A549 (cell line): ENCODE measurements at regions of chr9 and their contacts with region 1.

Region 1: DNA sequence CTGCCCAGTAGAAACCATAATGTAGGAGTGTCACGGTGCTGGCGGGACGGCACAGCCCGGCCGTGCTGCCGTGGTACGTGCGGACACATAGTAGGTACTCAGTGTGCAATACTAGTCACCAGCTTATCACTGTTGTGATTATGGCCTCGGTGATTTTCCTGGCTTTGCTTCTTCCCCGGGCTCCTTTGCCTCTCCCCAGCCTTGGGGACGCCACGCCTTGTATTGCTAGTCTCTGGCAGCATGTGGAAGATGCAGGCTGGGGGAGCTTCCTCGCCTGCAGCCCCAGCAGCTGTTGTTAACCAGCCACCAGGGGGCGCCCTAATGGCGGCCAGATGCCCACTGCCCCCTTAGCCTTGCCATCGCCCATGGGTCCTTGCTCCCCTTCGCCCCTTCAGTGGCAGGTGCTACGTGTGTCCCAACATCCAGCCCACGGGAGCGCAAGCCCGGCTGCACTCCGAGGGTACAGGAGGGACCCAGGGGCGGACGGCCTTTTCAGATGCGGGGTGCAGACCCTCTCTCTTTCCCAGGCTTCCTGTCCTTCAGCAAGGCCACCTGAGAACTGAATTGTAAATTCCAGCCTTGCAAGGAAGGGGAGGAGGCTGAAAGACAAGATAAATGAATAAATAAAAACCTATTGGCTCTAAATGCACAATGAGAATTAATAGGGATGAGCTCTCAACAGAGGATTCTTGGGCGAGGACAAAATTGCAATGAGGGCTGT is 8.0 kb downstream of the NTNG2 start:
- DNase-seq: peak; percentile 58 to 66
- ATAC-seq: peak; percentile 66 to 85
- H3K4me3 ChIP-seq: no peak overlapping the region
- H3K27ac ChIP-seq: no peak overlapping the region
- H3K4me1 ChIP-seq: peaks cover 6% of the 10 kb centered on the region
- CTCF ChIP-seq: peak; percentile 84
- EP300 ChIP-seq: no peak
- POLR2A ChIP-seq: no peak
- RAD21 ChIP-seq: peak; percentile 61 to 67

Region 2: GRCh38 chr9:132154863-132155309 is 14.9 kb before region 1 on chr9:
- CTCF ChIA-PET with region 1: interaction called, 73 read pairs
- POLR2A ChIA-PET with region 1: no interaction called
- DNase-seq: no peak
- ATAC-seq: no peak
- H3K4me3 ChIP-seq: no peak overlapping the region
- H3K27ac ChIP-seq: no peak overlapping the region
- H3K4me1 ChIP-seq: no peaks in the 10 kb centered on the region
- CTCF ChIP-seq: no peak
- EP300 ChIP-seq: no peak
- POLR2A ChIP-seq: no peak
- RAD21 ChIP-seq: no peak

Region 3: DNA sequence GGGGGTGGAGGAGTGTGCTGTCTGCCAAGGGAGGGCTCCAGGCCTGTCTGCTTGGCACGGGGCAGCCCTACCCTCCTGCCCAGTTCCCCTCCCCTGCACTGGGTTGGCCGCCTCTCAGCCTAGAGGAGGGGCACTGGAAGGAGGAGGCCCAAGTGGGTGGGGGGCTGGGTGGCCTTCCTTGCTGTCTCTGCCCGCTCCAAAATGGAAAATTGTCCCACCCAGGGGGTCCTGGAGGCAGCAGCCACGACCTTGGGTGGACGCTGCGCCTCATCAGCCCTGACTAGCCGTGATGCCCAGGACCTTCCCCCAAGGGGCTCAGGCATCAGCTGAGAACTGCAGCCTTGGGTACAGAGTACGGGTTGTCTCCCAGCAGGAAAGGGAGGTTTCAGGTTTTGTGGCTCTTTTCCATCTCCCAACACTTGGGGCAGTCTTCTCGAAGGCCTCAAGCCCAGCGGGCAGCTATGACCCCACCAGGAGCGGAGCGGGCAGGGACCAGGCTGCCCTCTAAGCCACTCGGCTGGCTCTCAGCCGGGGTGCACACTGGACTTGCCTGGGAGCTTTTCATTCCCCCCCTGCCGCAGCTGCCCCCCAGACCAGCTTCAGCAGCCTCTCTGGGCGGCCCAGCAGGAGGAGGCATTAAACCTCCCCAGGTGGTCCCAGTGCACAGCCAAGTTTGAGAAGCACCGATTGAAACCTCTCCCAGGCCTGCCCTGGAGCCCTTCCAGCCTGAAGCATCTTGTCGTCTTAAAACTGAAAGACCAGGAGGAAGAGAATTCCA is 12.7 kb after region 1 on chr9:
- CTCF ChIA-PET with region 1: interaction called, 28 read pairs
- POLR2A ChIA-PET with region 1: interaction called, 4 read pairs
- DNase-seq: peak in 1 of 2 experiments; percentile 26
- ATAC-seq: peak; percentile 60 to 85; a peak in 4 of 6 replicates
- H3K4me3 ChIP-seq: no peak overlapping the region
- H3K27ac ChIP-seq: no peak overlapping the region
- H3K4me1 ChIP-seq: no peaks in the 10 kb centered on the region
- CTCF ChIP-seq: no peak
- EP300 ChIP-seq: no peak
- POLR2A ChIP-seq: no peak
- RAD21 ChIP-seq: no peak

Region 4: DNA sequence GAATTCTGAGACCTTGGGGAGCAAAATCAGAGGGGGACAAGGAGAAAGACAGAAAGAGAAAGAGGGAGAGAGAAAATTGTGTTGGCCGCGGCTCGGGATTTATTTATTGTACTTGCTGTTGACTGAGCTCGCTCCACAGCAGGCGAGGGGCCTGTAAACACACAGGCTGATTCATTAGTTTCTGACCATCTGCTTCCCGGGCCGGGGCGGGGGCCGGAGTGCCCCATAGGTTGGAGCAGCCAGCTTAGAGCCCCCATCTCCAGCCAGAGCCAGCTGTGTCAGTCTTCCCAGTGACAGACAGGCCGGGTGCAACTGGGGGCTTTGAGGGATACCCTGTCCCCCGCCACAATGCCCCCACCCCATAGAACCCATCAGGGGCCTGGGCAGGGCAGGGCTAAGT is 22.9 kb after region 1 on chr9:
- CTCF ChIA-PET with region 1: interaction called, 14 read pairs
- POLR2A ChIA-PET with region 1: no interaction called
- DNase-seq: no peak
- ATAC-seq: no peak
- H3K4me3 ChIP-seq: no peak overlapping the region
- H3K27ac ChIP-seq: no peak overlapping the region
- H3K4me1 ChIP-seq: no peaks in the 10 kb centered on the region
- CTCF ChIP-seq: no peak
- EP300 ChIP-seq: no peak
- POLR2A ChIP-seq: no peak
- RAD21 ChIP-seq: no peak

Region 5: DNA sequence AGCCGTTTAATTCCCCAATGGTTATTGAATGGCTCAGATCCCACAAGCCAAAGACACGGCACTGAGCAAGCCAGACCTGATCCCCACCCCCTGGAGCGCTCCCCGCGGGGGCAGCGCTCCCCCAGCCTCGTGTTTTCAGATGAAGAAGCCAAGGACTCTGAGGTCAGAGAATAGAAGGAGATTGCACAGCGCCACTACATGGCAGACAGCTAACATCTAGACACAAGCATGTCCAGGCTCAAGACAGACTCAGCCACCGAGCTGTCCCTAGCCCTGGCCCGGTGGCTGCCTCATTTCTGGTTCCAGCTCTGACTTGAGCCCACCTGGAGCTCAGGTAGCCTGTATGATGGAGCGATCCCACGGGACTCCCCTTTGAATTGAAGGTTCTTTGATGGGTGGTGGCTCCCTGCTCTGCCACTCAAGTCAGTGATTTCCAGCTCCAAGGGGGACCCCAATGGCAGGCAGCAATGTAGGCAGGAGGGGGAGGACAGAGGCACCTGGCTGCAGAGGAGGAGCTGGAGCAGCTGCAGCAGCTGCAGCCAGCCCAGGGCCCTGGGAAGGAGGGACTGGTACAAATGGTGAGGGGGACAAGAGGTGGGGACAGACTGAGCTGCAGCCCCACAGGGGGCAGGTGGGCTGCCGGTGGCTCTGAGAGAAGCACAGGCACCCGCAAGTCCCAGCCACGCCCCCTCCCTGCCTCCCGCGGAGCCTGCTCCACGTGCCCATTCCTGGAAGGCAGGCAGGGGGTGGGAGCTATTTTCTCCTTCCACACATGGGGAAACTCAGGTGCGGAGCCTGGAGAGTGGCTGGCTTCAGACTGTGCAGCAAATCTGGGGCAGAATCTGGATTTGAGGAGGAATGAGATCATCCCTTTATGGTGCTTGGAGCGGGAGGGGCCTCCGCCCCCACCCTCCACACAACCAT is 32.2 kb after region 1 on chr9:
- CTCF ChIA-PET with region 1: interaction called, 11 read pairs
- POLR2A ChIA-PET with region 1: no interaction called
- DNase-seq: peak in 1 of 2 experiments; percentile 20
- ATAC-seq: peak; percentile 73 to 81; a peak in 5 of 6 replicates
- H3K4me3 ChIP-seq: no peak overlapping the region
- H3K27ac ChIP-seq: no peak overlapping the region
- H3K4me1 ChIP-seq: no peaks in the 10 kb centered on the region
- CTCF ChIP-seq: peak; percentile 19; the same call in 2 of the 3 replicates
- EP300 ChIP-seq: no peak
- POLR2A ChIP-seq: no peak
- RAD21 ChIP-seq: 0 out of 5 replicates have a peak, but pooled peaks of 1 of the 2 experiments have one; percentile 18

Region 6: GRCh38 chr9:132214027-132214622 is 44.3 kb after region 1 on chr9:
- CTCF ChIA-PET with region 1: interaction called, 13 read pairs
- POLR2A ChIA-PET with region 1: no interaction called
- DNase-seq: peak; percentile 51 to 72
- ATAC-seq: peak; percentile 83 to 86
- H3K4me3 ChIP-seq: no peak overlapping the region
- H3K27ac ChIP-seq: peak overlapping the region; percentile 53 to 67; a peak in 4 of 6 replicates
- H3K4me1 ChIP-seq: peaks cover 11% of the 10 kb centered on the region
- CTCF ChIP-seq: no peak
- EP300 ChIP-seq: no peak
- POLR2A ChIP-seq: no peak
- RAD21 ChIP-seq: no peak